ENCODE measurements at regions of chr2 and their contacts with region 1.

Region 1: DNA sequence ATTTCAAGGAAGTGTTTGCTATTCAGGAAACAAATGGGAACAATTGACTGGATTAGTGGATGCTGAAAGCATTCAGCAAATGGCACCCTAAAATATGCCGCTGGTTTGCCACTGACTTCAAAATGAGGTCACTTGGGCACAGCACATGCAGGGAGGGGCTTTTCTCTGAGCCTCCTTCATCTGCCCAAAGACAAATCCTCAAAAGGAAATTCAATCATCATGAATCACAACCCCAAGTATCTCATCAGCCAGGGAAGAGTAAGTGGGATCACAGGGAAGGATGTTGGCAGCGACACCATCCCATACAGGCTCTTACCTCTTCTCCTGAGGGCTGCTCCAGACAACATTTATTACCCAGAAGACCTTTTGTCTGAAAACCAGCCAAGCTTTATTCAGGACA is 14.4 kb upstream of the SP140L start:
- DNase-seq: no peak
- H3K4me3 ChIP-seq: no peak overlapping the region
- H3K27ac ChIP-seq: no peak overlapping the region
- H3K4me1 ChIP-seq: no peaks in the 10 kb centered on the region; a peak in 1 of 4 replicates
- H3K27me3 ChIP-seq: no peaks in the 10 kb centered on the region
- CTCF ChIP-seq: no peak
- EP300 ChIP-seq: no peak
- RAD21 ChIP-seq: no peak

Region 2: GRCh38 chr2:229969921-229970320 is 342.7 kb before region 1 on chr2:
- CTCF ChIA-PET with region 1: no interaction called
- POLR2A ChIA-PET with region 1: no interaction called
- DNase-seq: no peak
- H3K4me3 ChIP-seq: no peak overlapping the region
- H3K27ac ChIP-seq: no peak overlapping the region
- H3K4me1 ChIP-seq: peaks cover 0 to 5% of the 10 kb centered on the region in 2 experiments; a peak in 1 of 4 replicates
- H3K27me3 ChIP-seq: no peaks in the 10 kb centered on the region
- CTCF ChIP-seq: no peak
- EP300 ChIP-seq: no peak
- RAD21 ChIP-seq: no peak

Region 3: DNA sequence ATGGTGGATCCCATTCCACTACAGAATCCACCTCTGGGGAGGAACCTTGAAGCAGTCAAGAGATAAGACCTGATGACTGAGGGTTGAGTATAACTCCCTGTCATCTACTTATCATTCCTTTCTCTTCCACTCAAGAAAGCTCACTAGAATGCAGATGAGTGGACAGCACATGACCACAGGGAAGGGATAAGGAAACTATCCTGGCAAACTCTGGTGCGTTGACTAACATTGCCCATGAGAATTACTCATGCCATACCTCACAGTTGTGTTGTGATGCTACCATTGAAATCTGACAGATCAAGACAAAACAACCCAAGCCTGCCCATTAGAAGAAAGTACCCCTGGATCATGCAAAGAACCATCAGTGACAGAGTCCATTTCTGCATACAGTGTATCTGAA is 270.4 kb before region 1 on chr2:
- CTCF ChIA-PET with region 1: no interaction called
- POLR2A ChIA-PET with region 1: no interaction called
- DNase-seq: no peak
- H3K4me3 ChIP-seq: no peak overlapping the region
- H3K27ac ChIP-seq: no peak overlapping the region
- H3K4me1 ChIP-seq: no peaks in the 10 kb centered on the region; a peak in 1 of 4 replicates
- H3K27me3 ChIP-seq: no peaks in the 10 kb centered on the region
- CTCF ChIP-seq: no peak
- EP300 ChIP-seq: no peak
- RAD21 ChIP-seq: no peak

Region 4: DNA sequence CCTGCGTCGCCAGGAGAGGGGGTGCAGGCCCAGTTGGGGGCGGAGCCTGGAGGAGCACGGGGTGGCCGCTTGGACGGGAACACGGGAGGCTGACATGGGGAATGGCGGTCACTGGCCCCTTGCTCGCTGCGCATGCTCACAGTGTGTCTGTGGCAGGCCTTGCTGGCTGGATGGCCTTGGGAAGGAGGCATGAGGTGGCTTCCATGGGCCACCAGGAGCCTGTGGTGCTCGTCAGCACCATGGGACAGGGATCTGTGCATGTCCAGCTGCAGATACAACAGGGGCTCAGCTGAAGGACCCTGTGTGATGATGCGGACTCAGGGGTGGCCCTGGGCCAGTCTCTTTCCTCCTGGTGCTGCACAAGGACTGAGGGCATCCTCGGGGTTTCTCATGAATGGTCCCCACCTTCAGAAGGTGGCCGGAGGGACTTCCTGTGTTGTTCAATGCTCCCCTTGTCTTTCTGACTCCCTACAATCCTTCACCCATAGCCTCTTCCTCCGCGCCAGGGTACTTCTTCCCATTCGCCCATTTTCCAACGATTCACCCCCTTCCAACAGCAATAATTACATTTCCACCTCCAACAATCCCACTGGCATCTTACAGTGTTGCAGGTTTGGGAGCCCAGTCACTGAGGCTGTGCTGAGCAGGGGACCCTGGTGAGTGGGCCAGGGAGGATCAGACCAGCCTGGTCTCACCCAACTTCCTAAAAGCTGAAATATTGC is 10.9 kb after region 1 on chr2:
- CTCF ChIA-PET with region 1: interaction called, 12 read pairs
- POLR2A ChIA-PET with region 1: no interaction called
- DNase-seq: peak; percentile 79
- H3K4me3 ChIP-seq: no peak overlapping the region; a peak in 1 of 4 replicates
- H3K27ac ChIP-seq: no peak overlapping the region
- H3K4me1 ChIP-seq: peaks cover 0 to 2% of the 10 kb centered on the region in 2 experiments; a peak in 1 of 4 replicates
- H3K27me3 ChIP-seq: no peaks in the 10 kb centered on the region
- CTCF ChIP-seq: peak; percentile 58; the same call in 1 of the 2 replicates
- EP300 ChIP-seq: no peak
- RAD21 ChIP-seq: peak; percentile 36

Region 5: DNA sequence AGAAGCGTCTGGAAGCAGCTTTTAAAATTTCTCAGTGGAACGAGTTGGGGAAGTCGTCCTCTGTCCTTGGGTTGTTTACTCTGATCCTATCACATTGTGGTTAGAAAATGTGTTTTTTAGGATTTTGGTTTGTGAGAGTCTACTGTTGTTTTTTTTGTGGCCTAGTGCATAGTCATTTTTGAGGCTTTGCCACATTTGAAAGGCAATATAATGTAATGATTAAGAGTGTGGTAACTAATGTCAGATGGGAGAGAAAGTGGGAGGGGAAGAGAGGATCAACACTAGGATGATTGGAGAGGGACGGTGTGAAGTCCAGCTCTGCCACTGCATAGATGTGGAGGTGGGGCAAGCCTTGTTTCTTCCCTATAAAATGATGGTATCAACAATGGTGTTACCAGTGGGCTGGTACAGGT is 22.8 kb after region 1 on chr2:
- CTCF ChIA-PET with region 1: no interaction called
- POLR2A ChIA-PET with region 1: no interaction called
- DNase-seq: no peak
- H3K4me3 ChIP-seq: no peak overlapping the region
- H3K27ac ChIP-seq: peak overlapping the region in 1 of 2 experiments; percentile 42; a peak in 2 of 4 replicates
- H3K4me1 ChIP-seq: 0 out of 4 replicates have a peak, but pooled peaks cover 0 to 7% of the 10 kb centered on the region in 2 experiments
- H3K27me3 ChIP-seq: no peaks in the 10 kb centered on the region
- CTCF ChIP-seq: no peak
- EP300 ChIP-seq: no peak
- RAD21 ChIP-seq: no peak

Region 6: DNA sequence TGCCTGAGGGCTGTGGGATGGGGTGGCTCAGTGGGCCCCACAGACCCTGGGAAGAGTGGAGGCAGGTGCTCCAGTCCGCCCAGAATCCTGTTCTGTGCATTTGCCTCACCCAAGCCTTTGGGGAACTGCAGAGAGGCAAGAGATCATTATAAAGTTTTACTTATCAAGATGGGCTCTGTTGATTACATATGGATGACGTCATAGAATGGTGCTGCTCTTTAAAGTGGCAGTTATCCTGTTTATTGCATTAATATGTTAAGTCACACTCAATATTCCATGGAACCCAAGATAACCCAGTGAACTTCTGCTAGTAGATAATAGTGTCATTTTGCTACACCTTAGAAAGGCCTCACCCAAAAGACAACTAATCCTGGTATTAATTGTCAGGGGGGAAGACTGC is 58.3 kb after region 1 on chr2:
- CTCF ChIA-PET with region 1: no interaction called
- POLR2A ChIA-PET with region 1: no interaction called
- DNase-seq: no peak
- H3K4me3 ChIP-seq: no peak overlapping the region
- H3K27ac ChIP-seq: no peak overlapping the region
- H3K4me1 ChIP-seq: no peaks in the 10 kb centered on the region
- H3K27me3 ChIP-seq: no peaks in the 10 kb centered on the region
- CTCF ChIP-seq: no peak
- EP300 ChIP-seq: no peak
- RAD21 ChIP-seq: no peak